ENCODE measurements at regions of chr19 and their contacts with region 1.

Region 1: GRCh38 chr19:43463381-43464136 is 1.8 kb downstream of the LYPD3 start:
- DNase-seq: peak; percentile 100
- ATAC-seq: peak; percentile 90
- H3K4me3 Mint-ChIP-seq: peak overlapping the region; percentile 87
- H3K27ac Mint-ChIP-seq: peak overlapping the region; percentile 93
- H3K4me1 Mint-ChIP-seq: peaks cover 48% of the 10 kb centered on the region
- H3K27me3 Mint-ChIP-seq: no peaks in the 10 kb centered on the region

Region 2: DNA sequence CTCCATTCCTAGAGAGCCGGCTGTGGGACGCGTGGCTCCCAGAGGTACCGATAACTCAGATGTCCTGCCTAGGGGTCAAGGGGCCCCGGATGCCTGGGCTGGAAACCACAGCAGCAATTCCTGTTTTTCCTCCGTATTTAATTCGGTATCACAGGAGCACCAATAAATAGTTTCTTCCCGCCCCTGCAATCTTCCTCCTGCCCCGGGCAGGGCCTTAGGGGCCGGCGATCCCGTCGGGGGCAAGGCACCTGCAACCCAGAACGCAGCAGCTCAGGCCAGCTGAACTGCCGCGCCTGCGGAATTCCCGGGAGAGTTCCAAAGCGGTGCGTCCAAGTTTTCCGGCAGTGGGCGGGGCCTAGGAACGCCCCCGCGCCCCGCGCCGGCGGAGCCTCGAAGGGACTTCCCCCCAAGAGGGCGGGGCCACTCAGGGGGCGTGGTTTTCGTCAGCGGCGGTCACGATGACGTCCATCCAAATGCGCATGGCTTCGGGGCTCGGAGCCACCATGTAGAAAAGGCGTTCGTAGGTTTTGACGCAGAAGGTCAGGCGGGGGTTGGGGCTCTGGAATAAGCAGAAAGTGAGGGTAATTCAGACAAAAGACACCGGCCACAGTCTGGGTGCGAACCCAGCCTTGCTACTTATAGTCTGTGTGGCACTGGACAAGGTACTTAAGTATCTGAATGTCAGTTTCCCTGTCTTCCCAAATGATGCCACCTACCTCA is 11.6 kb after region 1 on chr19:
- CTCF ChIA-PET with region 1: no interaction called
- POLR2A ChIA-PET with region 1: interaction called, 8 read pairs
- intact Hi-C with region 1: loop called (anchors 1 kb)
- DNase-seq: peak; percentile 98
- ATAC-seq: peak; percentile 86
- H3K4me3 Mint-ChIP-seq: peak overlapping the region; percentile 62
- H3K27ac Mint-ChIP-seq: peak overlapping the region; percentile 90
- H3K4me1 Mint-ChIP-seq: peaks cover 35% of the 10 kb centered on the region
- H3K27me3 Mint-ChIP-seq: no peaks in the 10 kb centered on the region

Region 3: DNA sequence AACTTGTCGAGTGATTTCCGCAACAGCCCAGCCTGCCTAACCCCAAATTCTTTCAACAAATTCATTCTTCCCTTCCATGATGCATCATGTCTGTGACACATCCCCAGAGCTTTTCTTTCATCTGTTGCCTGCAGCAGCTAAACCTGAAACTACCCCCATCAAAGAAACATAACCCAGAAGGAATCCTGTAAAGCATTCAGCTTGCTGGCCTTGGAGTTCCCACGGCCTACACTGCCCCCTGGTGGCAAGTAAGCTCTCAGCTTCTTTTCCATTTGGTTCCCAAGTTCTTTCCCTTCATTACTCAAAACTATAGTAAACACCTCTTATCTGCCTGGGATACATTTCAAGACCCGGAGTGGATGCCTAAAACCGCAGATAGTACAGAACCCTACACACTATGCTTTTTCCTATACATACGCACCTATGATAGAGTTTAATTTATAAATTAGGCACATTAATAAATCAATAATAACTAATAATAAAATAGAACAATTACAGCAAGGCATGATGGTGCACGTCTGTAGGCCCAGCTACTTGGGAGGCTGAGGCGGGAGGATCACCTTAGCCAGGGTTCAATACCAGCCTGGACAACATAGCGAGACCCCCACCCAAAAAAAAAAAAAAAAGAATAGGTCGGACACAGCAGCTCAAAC is 56.0 kb after region 1 on chr19:
- CTCF ChIA-PET with region 1: interaction called, 22 read pairs
- POLR2A ChIA-PET with region 1: interaction called, 8 read pairs
- intact Hi-C with region 1: no loop called
- DNase-seq: peak; percentile 90
- ATAC-seq: peak; percentile 100
- H3K4me3 Mint-ChIP-seq: no peak overlapping the region
- H3K27ac Mint-ChIP-seq: peak overlapping the region; percentile 19
- H3K4me1 Mint-ChIP-seq: peaks cover 17% of the 10 kb centered on the region
- H3K27me3 Mint-ChIP-seq: no peaks in the 10 kb centered on the region

Region 4: GRCh38 chr19:43532962-43533545 is 69.5 kb after region 1 on chr19 and contains the start of gene ZNF575:
- CTCF ChIA-PET with region 1: interaction called, 3 read pairs
- POLR2A ChIA-PET with region 1: no interaction called
- intact Hi-C with region 1: loop called in 1 of 2 experiments (anchors 1 kb)
- DNase-seq: peak; percentile 95
- ATAC-seq: peak; percentile 57
- H3K4me3 Mint-ChIP-seq: peak within 1 kb of the TSS; percentile 83
- H3K27ac Mint-ChIP-seq: peak within 1 kb of the TSS; percentile 97
- H3K4me1 Mint-ChIP-seq: peaks cover 20% of the 10 kb centered on the region
- H3K27me3 Mint-ChIP-seq: no peaks in the 10 kb centered on the region
- total RNA-seq, gene ZNF575: 3.4 to 4.3 TPM

Region 5: GRCh38 chr19:43619262-43620060 is 155.9 kb after region 1 on chr19 and contains the start of gene ZNF428:
- CTCF ChIA-PET with region 1: no interaction called
- POLR2A ChIA-PET with region 1: no interaction called
- intact Hi-C with region 1: loop called in 1 of 2 experiments (anchors 1 kb)
- DNase-seq: peak; percentile 94
- ATAC-seq: peak; percentile 92
- H3K4me3 Mint-ChIP-seq: peak within 1 kb of the TSS; percentile 94
- H3K27ac Mint-ChIP-seq: peak within 1 kb of the TSS; percentile 99
- H3K4me1 Mint-ChIP-seq: peaks cover 17% of the 10 kb centered on the region
- H3K27me3 Mint-ChIP-seq: no peaks in the 10 kb centered on the region
- total RNA-seq, gene ZNF428: 9.0 to 10.1 TPM

Measured in activated CD4-positive, alpha-beta T cell treated with anti-CD3 and anti-CD28 coated beads for 36 hours (primary cell).